PC-9 (cell line): ENCODE measurements at regions of chr17 and their contacts with region 1.

Region 1: DNA sequence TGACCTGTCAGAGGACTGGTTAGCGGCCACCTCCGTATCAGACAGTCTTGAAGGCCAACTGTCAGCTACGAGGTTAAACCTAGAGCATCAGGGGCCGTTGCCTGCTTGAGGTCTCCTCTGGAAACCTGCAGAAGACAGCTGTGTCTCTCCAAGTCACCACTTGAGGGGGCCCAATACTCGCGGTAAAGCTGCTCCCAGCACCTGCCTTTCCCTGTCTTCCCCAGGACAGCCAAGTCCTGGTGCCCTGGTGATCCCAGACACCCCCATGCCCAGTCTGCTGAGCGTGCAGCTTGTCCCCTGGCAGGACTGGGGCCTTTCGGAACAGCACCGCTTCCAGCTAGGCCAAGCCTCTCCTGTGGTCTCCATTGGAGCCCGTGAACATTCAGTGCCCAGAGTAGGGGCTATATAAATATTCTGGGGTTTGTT is 80.1 kb downstream of the DNAH17 start:
- DNase-seq: peak; percentile 61 to 79
- H3K4me3 ChIP-seq: no peak overlapping the region
- H3K27ac ChIP-seq: no peak overlapping the region
- H3K4me1 ChIP-seq: no peaks in the 10 kb centered on the region
- H3K27me3 ChIP-seq: no peaks in the 10 kb centered on the region
- CTCF ChIP-seq: peak; percentile 73

Region 2: GRCh38 chr17:78605429-78605828 is 108.3 kb after region 1 on chr17:
- CTCF ChIA-PET with region 1: no interaction called
- POLR2A ChIA-PET with region 1: no interaction called
- intact Hi-C with region 1: loop called (anchors 1 kb)
- DNase-seq: no peak
- H3K4me3 ChIP-seq: no peak overlapping the region
- H3K27ac ChIP-seq: no peak overlapping the region
- H3K4me1 ChIP-seq: no peaks in the 10 kb centered on the region
- H3K27me3 ChIP-seq: no peaks in the 10 kb centered on the region
- CTCF ChIP-seq: no peak

Region 3: DNA sequence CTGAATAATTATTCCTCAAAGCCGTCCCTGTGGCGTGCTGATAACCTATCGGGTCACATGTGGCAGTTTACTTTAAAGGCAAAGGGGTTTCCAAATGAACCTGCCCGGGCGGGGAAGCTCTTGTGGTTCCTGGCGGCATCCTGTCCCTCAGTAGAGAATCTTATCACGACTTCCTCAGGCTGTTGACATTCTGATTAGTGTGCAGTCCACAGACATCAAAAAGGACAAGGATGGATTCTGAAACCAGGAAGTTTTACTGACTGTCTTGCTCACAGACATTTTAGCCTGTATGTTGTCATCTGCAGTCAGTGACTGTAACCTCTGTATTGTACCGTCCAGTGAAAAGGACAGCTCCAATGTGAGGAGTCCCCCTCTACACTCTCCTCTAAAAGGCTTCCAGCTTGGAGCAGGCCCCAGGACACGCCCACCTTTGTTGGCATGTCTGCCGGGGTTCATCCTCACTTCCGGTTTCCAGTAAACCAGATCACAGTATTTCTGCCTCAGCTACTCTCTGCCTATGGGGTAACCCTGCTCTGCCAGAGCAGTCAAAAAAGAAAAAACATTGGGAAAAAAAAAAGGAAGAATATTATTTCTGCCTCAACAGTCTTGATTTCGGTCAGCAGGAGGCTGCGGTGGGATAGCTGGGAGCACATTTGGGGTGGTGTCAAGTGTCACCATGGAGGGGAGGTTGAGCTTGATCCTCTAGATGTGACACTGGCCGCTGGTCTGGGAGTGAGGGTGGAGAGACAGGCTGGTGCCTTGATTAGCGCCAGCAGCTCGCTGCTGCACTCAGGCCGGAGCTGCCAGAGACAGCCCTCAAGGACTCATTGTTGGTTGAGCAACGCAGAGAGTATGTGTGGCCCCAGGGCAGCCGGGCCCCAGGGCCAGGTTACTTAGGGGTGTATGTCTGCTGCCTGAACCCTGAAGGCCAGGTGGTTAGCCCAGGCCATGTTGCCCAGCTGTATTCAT is 169.1 kb after region 1 on chr17:
- CTCF ChIA-PET with region 1: no interaction called
- POLR2A ChIA-PET with region 1: no interaction called
- intact Hi-C with region 1: loop called (anchors 1 kb)
- DNase-seq: peak in 1 of 2 experiments; percentile 71
- H3K4me3 ChIP-seq: no peak overlapping the region
- H3K27ac ChIP-seq: no peak overlapping the region
- H3K4me1 ChIP-seq: peaks cover 9% of the 10 kb centered on the region
- H3K27me3 ChIP-seq: no peaks in the 10 kb centered on the region
- CTCF ChIP-seq: no peak

Region 4: DNA sequence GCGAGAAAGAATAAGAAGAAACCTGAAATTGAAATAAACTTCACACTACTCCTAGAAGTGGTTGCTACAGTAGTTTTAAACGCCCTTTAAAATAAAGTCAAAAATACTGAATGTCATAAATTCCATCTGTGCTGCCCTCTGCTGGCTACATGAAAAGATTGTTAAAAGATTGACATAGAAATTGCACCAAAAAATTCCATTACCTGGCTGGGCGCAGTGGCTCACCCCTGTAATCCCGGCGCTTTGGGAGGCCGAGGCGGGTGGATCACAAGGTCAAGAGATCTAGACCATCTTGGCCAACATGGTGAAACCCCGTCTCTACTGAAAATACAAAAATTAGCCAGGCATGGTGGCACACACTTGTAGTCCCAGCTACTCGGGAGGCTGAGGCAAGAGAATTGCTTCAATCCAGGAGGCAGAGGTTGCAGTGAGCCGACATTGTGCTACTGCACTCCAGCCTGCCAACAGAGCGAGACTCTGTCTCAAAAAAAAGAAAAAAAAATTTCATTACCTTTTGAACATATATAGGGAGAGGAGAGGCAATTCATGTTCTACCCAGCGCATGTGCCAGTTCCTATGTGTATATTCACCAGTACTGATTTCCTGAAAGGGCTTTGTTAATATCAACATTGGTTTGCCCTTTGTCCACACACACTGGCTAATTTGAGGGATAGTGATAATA is 248.4 kb after region 1 on chr17:
- CTCF ChIA-PET with region 1: no interaction called
- POLR2A ChIA-PET with region 1: no interaction called
- intact Hi-C with region 1: loop called (anchors 1 kb)
- DNase-seq: peak in 1 of 2 experiments; percentile 20
- H3K4me3 ChIP-seq: no peak overlapping the region
- H3K27ac ChIP-seq: no peak overlapping the region
- H3K4me1 ChIP-seq: peaks cover 16% of the 10 kb centered on the region
- H3K27me3 ChIP-seq: no peaks in the 10 kb centered on the region
- CTCF ChIP-seq: peak; percentile 76

Region 5: DNA sequence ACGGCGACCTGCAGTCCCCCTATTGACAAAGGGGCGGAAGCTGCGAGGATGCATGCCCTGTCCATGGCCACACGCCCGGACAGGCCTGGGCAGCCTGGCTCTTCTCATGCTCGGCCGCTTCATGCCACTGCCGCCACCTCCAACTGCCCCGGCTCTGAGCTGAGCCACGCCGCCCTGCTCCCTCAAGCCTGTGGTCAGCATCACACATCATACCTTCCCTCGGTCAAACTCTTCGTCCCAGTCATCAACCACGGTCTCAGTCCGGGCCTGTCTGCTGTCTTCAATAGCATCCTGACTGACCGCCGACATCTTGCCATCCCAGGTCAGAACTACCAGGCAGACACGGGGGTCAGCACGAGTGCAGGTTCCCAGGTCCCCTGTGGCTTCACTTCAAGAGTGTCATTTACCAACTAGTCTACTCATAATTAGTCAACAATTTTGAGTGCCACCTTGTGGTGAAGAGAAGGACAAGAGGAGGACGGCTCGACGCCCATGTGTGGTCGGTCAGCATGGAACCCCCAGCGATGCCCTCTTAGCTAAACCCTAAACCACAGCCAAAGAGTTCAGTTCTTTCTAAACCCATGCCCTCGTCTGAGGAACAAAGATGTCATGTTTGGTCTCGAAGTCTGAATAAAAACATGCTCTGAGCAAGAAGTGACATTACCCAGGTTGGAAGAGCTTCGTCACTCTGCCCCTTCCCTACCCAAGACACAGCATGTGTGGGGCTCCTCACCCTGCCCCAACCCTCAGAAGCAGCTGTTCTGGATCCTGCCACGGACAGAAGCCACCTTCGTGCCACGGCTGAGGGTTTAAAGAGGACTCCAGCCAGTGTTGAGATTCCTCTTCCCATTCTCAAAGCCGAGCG is 301.8 kb after region 1 on chr17:
- CTCF ChIA-PET with region 1: no interaction called
- POLR2A ChIA-PET with region 1: no interaction called
- intact Hi-C with region 1: loop called (anchors 2 kb)
- DNase-seq: no peak
- H3K4me3 ChIP-seq: no peak overlapping the region
- H3K27ac ChIP-seq: no peak overlapping the region
- H3K4me1 ChIP-seq: no peaks in the 10 kb centered on the region
- H3K27me3 ChIP-seq: no peaks in the 10 kb centered on the region
- CTCF ChIP-seq: peak; percentile 43; the same call in 1 of the 2 replicates